ENCODE measurements at regions of chr16 and their contacts with region 1.

Region 1: DNA sequence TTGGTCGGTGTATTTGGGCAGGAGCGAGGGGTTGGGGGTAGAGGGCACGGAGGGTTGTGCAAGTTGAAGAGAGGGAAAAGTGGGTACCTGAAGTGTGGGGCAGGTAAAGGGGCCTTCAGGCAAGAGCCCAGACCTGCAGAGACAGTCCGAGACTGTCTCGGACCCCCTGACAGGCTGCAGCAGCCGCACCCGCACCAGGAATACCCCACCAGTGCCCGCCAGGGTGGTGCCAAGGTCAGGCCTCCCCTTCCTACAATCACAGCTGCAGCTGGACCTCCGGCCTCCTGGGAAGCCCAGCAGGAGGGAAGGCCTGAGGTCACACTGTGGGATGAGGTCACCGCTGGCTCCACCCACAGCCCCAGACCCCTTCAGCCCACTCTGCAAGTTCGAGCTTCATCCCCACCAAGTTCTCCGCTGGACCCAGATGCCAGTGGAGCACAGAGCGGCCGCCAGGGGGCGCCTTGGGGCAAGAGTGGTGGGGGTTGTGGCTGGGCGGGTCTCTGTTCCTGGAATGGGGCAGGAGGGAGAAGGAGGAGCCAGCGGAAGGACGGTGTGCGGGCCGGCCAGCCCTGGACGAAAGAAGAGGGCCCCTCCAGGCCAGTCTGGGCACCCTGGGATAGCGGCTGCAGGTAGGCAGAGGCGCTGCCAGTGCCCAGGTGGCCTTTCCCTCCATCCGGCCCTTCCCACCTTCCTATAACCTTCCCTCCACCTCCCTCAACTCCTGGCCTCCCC is at the start of gene HSD3B7:
- DNase-seq: peak; percentile 64
- H3K4me3 ChIP-seq: peak within 1 kb of the TSS; percentile 22 to 54 (median 44)
- H3K27ac ChIP-seq: no peak within 1 kb of the TSS
- H3K4me1 ChIP-seq: peaks cover 12% of the 10 kb centered on the region
- H3K27me3 ChIP-seq: no peaks in the 10 kb centered on the region
- CTCF ChIP-seq: peak; percentile 84 to 96
- total RNA-seq, gene HSD3B7: 3.8 to 3.9 TPM

Region 2: GRCh38 chr16:31032736-31033708 is 48.2 kb after region 1 on chr16 and contains the start of gene STX4:
- CTCF ChIA-PET with region 1: no interaction called
- dilution Hi-C with region 1: no loop called
- in situ Hi-C with region 1: no loop called
- intact Hi-C with region 1: loop called (anchors 1 kb)
- DNase-seq: peak; percentile 95
- H3K4me3 ChIP-seq: peak within 1 kb of the TSS; percentile 82 to 94 (median 89)
- H3K27ac ChIP-seq: peak within 1 kb of the TSS; percentile 78
- H3K4me1 ChIP-seq: peaks cover 12% of the 10 kb centered on the region
- H3K27me3 ChIP-seq: no peaks in the 10 kb centered on the region
- CTCF ChIP-seq: no peak
- total RNA-seq, gene STX4: 13.3 to 64.3 TPM

Region 3: GRCh38 chr16:31117391-31118197 is 132.8 kb after region 1 on chr16 and contains the start of gene KAT8:
- CTCF ChIA-PET with region 1: no interaction called
- dilution Hi-C with region 1: no loop called
- in situ Hi-C with region 1: no loop called
- intact Hi-C with region 1: no loop called
- DNase-seq: peak; percentile 98
- H3K4me3 ChIP-seq: peak within 1 kb of the TSS; percentile 57 to 80 (median 65)
- H3K27ac ChIP-seq: peak within 1 kb of the TSS; percentile 100
- H3K4me1 ChIP-seq: peaks cover 14% of the 10 kb centered on the region
- H3K27me3 ChIP-seq: no peaks in the 10 kb centered on the region
- CTCF ChIP-seq: no peak
- total RNA-seq, gene KAT8: 22.7 to 34.0 TPM

Region 4: GRCh38 chr16:31301708-31302400 is 317.0 kb after region 1 on chr16:
- CTCF ChIA-PET with region 1: no interaction called
- dilution Hi-C with region 1: no loop called
- in situ Hi-C with region 1: no loop called
- intact Hi-C with region 1: loop called (anchors 1 kb)
- DNase-seq: peak; percentile 26
- H3K4me3 ChIP-seq: no peak overlapping the region
- H3K27ac ChIP-seq: no peak overlapping the region
- H3K4me1 ChIP-seq: no peaks in the 10 kb centered on the region
- H3K27me3 ChIP-seq: no peaks in the 10 kb centered on the region
- CTCF ChIP-seq: peak in 1 of 2 donors; percentile 5

Region 5: GRCh38 chr16:31713071-31713944 is 728.5 kb after region 1 on chr16:
- CTCF ChIA-PET with region 1: no interaction called
- dilution Hi-C with region 1: no loop called
- in situ Hi-C with region 1: loop called in 1 of 2 experiments (anchors 25 kb)
- intact Hi-C with region 1: no loop called
- DNase-seq: peak; percentile 90
- H3K4me3 ChIP-seq: peak overlapping the region; percentile 90 to 98 (median 94)
- H3K27ac ChIP-seq: peak overlapping the region; percentile 89
- H3K4me1 ChIP-seq: peaks cover 15% of the 10 kb centered on the region
- H3K27me3 ChIP-seq: no peaks in the 10 kb centered on the region
- CTCF ChIP-seq: no peak

Region 6: DNA sequence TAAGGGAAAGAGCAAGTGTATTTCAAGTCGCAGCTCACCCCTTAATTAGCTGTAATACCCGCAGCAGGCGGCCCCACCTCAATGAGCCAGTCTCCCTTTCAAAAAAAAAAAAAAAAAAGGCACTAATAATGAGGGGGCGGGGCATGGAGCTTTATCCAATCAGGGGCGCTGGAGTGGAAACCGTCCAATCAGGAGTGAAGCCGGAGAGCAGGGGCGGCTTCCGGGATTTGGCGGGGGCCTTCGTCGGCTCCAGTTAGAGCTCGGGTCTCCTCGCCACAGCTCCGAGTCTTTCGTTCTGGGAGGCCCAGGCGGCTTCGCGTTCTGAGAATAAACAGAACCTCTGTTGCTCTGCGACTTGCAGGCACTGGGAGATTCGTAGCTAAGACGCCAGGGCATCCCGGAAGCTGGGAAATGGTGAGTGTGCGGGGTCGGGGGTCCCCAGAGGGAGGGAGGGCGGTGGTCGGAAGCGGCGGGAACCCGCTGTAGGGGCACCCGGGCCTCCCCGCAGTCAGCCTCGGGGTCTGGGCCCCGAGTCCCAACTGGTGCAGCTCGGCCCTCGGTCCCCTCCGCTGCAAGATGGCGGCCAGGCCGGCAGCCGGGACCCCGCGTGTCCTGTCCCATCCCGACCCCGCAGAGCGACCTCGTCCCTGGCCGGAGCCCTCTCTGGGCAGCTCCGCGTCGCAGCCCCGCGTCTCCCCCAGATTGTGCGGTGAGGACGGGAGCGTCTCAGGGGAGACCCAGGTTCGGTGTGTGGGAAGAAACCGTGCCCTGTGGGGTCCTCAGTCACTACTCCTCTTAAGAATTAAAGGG is 888.9 kb after region 1 on chr16 and contains the start of gene ZNF267:
- CTCF ChIA-PET with region 1: no interaction called
- dilution Hi-C with region 1: no loop called
- in situ Hi-C with region 1: loop called in 1 of 2 experiments (anchors 25 kb)
- intact Hi-C with region 1: loop called (anchors 1 kb)
- DNase-seq: peak; percentile 87
- H3K4me3 ChIP-seq: peak within 1 kb of the TSS; percentile 93 to 99 (median 94)
- H3K27ac ChIP-seq: peak within 1 kb of the TSS; percentile 90
- H3K4me1 ChIP-seq: peaks cover 44% of the 10 kb centered on the region
- H3K27me3 ChIP-seq: no peaks in the 10 kb centered on the region
- CTCF ChIP-seq: no peak
- total RNA-seq, gene ZNF267: 11.4 to 14.0 TPM